ENCODE measurements at regions of chr3 and their contacts with region 1.

Region 1: GRCh38 chr3:108153451-108153981 is 62.7 kb upstream of the CD47 start:
- DNase-seq: peak; percentile 86
- H3K4me3 Mint-ChIP-seq: no peak overlapping the region
- H3K27ac Mint-ChIP-seq: no peak overlapping the region
- H3K4me1 Mint-ChIP-seq: peaks cover 18% of the 10 kb centered on the region
- H3K27me3 Mint-ChIP-seq: no peaks in the 10 kb centered on the region

Region 2: DNA sequence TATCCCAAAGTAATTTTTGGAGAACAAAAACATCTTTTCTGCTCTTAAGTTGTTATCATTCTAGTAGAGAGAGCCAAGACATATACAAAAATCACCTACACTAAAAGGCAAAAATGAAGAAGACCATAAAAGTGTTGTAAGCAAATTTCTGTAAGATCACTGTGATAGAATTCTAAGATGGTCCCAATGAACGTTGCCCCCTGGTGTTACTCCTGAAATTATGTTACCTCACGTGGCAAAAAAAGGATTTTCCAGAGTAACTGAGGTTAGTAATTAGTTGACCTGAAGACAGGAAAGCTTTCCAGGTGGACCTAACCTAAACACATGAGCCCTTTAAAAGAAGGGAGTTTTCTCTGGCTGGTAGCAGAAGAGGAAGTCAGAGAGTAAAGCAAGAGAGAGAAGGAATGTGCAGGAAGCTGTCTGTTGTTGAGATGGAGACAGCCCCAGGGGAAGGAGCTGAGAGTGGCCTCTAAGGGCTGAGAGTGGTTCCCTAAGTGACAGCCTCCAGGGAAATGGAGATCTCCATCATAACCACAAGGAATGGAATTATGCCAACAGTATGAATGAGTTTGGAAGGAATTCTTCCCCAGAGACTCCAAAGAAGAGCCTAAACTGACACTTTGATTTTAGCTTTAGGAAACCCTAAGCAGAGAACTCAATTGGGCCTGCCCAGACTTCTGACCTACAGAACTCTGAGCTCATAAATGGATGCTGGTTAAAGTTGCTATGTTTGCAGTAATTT is 268.6 kb before region 1 on chr3:
- intact Hi-C with region 1: no loop called
- DNase-seq: peak; percentile 37
- H3K4me3 Mint-ChIP-seq: no peak overlapping the region
- H3K27ac Mint-ChIP-seq: no peak overlapping the region
- H3K4me1 Mint-ChIP-seq: no peaks in the 10 kb centered on the region
- H3K27me3 Mint-ChIP-seq: peaks cover 2% of the 10 kb centered on the region

Region 3: GRCh38 chr3:108406661-108407206 is 253.2 kb after region 1 on chr3:
- intact Hi-C with region 1: loop called (anchors 1 kb)
- DNase-seq: peak; percentile 73
- H3K4me3 Mint-ChIP-seq: no peak overlapping the region
- H3K27ac Mint-ChIP-seq: no peak overlapping the region
- H3K4me1 Mint-ChIP-seq: no peaks in the 10 kb centered on the region
- H3K27me3 Mint-ChIP-seq: peaks cover 3% of the 10 kb centered on the region

Region 4: DNA sequence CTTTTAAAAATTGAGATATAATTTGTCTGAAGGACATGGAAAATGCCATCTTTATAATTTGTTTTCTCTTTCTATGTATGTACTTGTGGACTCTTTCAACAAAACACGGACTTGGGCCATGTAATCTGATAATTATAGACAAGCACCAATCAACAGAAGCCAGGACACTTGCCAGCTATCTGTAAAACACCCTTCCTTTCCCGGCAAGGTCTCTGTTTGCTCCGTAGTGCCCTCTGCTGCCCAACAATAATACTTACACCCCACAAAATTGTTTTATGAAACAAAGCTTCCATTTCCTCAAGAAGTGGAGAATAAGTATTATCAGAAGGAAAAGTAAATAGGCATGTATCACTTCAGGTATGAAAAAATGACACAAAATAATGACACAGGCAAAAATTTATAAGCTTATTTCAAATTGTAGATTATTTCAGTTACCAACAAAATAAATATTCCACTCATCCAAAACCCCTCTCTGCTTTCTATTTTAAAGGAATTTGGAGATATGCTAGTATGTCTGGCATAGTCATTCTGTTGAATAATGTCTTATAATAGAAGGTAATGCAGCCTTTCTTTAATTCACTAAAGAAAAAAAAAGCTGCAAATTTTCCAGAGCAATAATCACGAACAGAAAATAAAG is 324.1 kb after region 1 on chr3:
- intact Hi-C with region 1: loop called (anchors 1 kb)
- DNase-seq: peak; percentile 86
- H3K4me3 Mint-ChIP-seq: no peak overlapping the region
- H3K27ac Mint-ChIP-seq: no peak overlapping the region
- H3K4me1 Mint-ChIP-seq: peaks cover 3% of the 10 kb centered on the region
- H3K27me3 Mint-ChIP-seq: peaks cover 10% of the 10 kb centered on the region

Region 5: GRCh38 chr3:108552267-108553159 is 399.0 kb after region 1 on chr3:
- intact Hi-C with region 1: loop called (anchors 5 kb)
- DNase-seq: peak; percentile 68
- H3K4me3 Mint-ChIP-seq: no peak overlapping the region
- H3K27ac Mint-ChIP-seq: no peak overlapping the region
- H3K4me1 Mint-ChIP-seq: peaks cover 9% of the 10 kb centered on the region
- H3K27me3 Mint-ChIP-seq: no peaks in the 10 kb centered on the region

Measured in activated CD4-positive, alpha-beta T cell treated with anti-CD3 and anti-CD28 coated beads, Interleukin-2, amount 10 ng/mL, durations not matched to agents 24 days and 14 days (primary cell).